A673 (cell line): ENCODE measurements at regions of chr5 and their contacts with region 1.

Region 1: DNA sequence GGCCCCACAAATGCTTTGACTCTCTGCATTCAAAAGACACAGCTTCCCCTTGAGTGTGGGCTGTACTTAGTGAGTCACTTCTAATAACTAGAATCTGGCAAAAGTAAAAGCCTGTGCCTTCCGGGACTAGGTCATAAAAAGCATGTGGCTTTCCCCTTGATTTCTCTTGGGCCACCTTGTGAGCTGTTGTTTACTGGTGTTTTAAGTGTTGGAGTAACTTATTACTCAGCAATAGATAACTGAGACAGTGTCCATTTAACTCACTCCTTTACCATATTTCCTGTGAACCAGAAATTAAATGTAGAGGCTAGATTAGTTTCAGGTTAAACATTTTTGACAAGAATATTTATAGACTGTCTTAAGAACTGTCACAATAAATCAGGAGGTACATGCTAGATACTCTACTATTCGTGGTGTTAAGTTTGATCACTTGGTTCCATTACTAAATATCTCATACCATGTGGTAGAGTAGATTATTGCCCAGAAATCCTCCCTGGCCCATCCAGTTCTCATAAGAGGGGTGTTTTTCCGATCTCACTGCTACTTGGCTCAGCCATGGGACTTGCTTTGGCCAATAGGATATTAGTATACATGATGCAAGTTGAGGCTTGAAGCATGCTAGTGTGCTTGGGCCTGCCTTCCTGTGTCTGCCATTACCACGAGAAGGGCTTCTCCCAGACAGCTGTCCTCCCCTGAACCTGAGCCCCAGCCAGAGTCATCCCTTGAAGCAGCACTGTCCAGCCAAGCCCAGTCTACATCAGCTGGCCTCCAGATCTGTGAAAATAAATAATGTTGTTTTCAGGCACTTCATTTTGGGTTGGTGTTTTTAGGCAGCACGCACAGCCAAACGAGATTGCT is 10.4 kb upstream of the CMBL start:
- DNase-seq: peak; percentile 53
- H3K4me3 ChIP-seq: no peak overlapping the region
- H3K27ac ChIP-seq: no peak overlapping the region
- H3K4me1 ChIP-seq: no peaks in the 10 kb centered on the region
- H3K27me3 ChIP-seq: no peaks in the 10 kb centered on the region
- CTCF ChIP-seq: no peak

Region 2: DNA sequence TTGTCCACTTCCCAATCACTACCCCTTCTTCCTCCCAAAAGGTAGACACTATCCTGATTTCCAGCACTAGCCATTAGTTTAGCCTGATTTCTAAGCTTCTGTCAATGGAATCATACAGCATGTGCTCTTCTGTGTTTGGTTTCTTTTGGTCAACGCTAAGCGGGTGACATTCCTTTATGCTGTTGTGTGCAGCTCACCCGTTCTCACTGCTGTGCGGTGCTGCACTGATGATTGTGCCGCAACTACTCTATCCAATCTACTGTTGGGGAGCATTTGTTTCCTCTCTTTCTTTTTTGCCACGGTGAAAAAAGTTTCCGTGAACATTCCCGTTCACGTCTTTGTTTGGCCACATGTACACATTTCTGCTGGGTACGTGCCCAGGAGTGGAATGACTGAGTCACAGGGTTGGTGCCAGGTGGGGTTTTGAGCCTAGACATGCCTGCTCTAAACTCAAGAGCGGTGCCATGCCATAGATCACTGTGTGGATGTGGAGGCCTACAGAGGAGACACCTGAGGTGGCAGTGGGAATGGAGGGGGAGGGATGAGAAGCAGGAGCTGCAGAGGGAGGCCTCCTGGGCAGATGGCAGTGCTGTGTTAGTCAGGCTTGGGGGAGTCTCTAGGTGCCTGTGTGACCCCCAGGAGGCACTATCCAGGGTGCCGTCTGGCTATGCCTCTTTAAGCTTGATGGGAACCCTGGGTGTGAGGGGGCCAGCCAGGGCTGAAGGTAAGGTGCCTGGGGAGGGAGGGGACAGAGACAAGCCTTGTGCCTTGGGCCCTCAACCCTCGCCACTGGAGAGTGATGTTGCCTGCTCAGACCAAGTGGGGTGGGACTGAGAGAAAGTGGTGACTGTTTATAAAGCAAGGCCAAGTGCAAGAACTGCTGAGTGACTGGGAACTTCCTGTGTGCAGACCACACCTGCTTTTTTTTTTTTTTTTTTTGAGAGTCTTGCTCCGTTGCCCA is 234.4 kb after region 1 on chr5:
- CTCF ChIA-PET with region 1: no interaction called
- POLR2A ChIA-PET with region 1: interaction called, 10 read pairs
- intact Hi-C with region 1: no loop called
- DNase-seq: no peak
- H3K4me3 ChIP-seq: no peak overlapping the region
- H3K27ac ChIP-seq: no peak overlapping the region
- H3K4me1 ChIP-seq: no peaks in the 10 kb centered on the region
- H3K27me3 ChIP-seq: no peaks in the 10 kb centered on the region
- CTCF ChIP-seq: no peak

Region 3: GRCh38 chr5:11361768-11362167 is 1043.7 kb after region 1 on chr5:
- CTCF ChIA-PET with region 1: no interaction called
- POLR2A ChIA-PET with region 1: no interaction called
- intact Hi-C with region 1: no loop called
- DNase-seq: no peak
- H3K4me3 ChIP-seq: no peak overlapping the region
- H3K27ac ChIP-seq: no peak overlapping the region
- H3K4me1 ChIP-seq: no peaks in the 10 kb centered on the region
- H3K27me3 ChIP-seq: no peaks in the 10 kb centered on the region
- CTCF ChIP-seq: no peak